ENCODE measurements at regions of chr22 and their contacts with region 1.

Region 1: GRCh38 chr22:36028646-36029405 is at the start of gene RBFOX2:
- DNase-seq: peak; percentile 98
- H3K4me3 ChIP-seq: peak within 1 kb of the TSS; percentile 72 to 95 (median 92)
- H3K27ac ChIP-seq: peak within 1 kb of the TSS; percentile 94 to 97 (median 96)
- H3K4me1 ChIP-seq: peaks cover 23 to 48% (median 42%) of the 10 kb centered on the region in 4 donors
- H3K27me3 ChIP-seq: no peaks in the 10 kb centered on the region
- CTCF ChIP-seq: no peak
- EP300 ChIP-seq: no peak
- POLR2A ChIP-seq: no peak
- total RNA-seq, gene RBFOX2: 113 to 179 (median 155) TPM

Region 2: DNA sequence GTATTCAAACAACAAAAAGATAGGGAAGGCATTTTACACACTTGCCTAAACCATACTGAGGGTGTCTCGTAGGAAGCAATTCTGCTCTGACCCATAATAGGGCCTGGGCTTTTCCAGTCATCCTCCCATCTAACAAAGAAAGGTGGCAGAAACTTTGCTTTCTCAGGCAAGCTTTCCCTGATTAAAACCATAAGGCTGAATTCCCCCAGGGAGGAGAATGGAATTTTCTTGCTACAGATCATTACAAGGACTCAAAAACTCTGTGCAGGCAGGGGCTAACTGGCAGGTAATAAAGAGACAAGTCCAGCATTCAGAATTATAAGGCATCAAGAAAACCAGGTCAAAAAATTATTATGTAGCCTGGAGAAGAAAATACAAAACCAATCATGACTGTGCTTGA is 90.6 kb before region 1 on chr22:
- intact Hi-C with region 1: no loop called
- DNase-seq: no peak
- H3K4me3 ChIP-seq: no peak overlapping the region
- H3K27ac ChIP-seq: no peak overlapping the region
- H3K4me1 ChIP-seq: peaks cover 0 to 23% (median 10%) of the 10 kb centered on the region in 4 donors
- H3K27me3 ChIP-seq: no peaks in the 10 kb centered on the region
- CTCF ChIP-seq: no peak
- EP300 ChIP-seq: no peak
- POLR2A ChIP-seq: no peak

Region 3: GRCh38 chr22:35966314-35967045 is 62.3 kb before region 1 on chr22:
- intact Hi-C with region 1: loop called (anchors 5 kb)
- DNase-seq: no peak
- H3K4me3 ChIP-seq: no peak overlapping the region
- H3K27ac ChIP-seq: peak overlapping the region in 1 of 4 donors; percentile 11
- H3K4me1 ChIP-seq: peaks cover 24 to 67% (median 47%) of the 10 kb centered on the region in 4 donors
- H3K27me3 ChIP-seq: no peaks in the 10 kb centered on the region
- CTCF ChIP-seq: no peak
- EP300 ChIP-seq: no peak
- POLR2A ChIP-seq: no peak

Region 4: DNA sequence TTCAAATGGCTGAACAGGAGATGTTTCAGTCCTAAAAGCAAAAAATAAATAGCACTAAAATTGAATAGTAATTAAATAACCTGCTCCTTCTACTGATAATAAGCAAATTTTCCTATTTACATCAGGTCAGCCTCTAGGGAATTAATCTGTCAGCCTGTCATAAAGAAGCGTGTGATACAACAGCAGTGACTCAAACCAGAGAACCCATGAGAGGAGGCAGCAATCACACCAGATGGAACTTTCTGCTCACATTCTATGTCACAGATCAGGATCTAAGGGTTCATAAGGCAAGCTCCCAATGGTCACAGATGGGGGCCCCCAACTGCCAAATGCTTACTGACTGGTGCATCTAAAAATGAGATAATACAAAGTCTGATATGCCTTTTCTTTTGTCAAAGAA is 41.3 kb before region 1 on chr22:
- intact Hi-C with region 1: no loop called
- DNase-seq: peak; percentile 55
- H3K4me3 ChIP-seq: no peak overlapping the region
- H3K27ac ChIP-seq: no peak overlapping the region
- H3K4me1 ChIP-seq: peaks cover 23 to 87% (median 80%) of the 10 kb centered on the region in 4 donors
- H3K27me3 ChIP-seq: no peaks in the 10 kb centered on the region
- CTCF ChIP-seq: no peak
- EP300 ChIP-seq: no peak
- POLR2A ChIP-seq: no peak

Measured in esophagus muscularis mucosa (tissue), 4 donors.